ENCODE measurements at regions of chr17 and their contacts with region 1.

Region 1: GRCh38 chr17:75978938-75979704 is at the starts of genes ACOX1 and TEN1:
- DNase-seq: peak; percentile 94
- H3K4me3 Mint-ChIP-seq: peak within 1 kb of the TSS; percentile 96
- H3K27ac Mint-ChIP-seq: peak within 1 kb of the TSS; percentile 100
- H3K4me1 Mint-ChIP-seq: peaks cover 22% of the 10 kb centered on the region
- H3K27me3 Mint-ChIP-seq: no peaks in the 10 kb centered on the region
- total RNA-seq, gene ACOX1: 29.4 and 30.6 TPM in 2 replicates
- total RNA-seq, gene TEN1: 11.4 and 13.4 TPM in 2 replicates

Region 2: GRCh38 chr17:75914643-75915267 is 64.4 kb before region 1 on chr17:
- intact Hi-C with region 1: no loop called
- DNase-seq: no peak
- H3K4me3 Mint-ChIP-seq: no peak overlapping the region
- H3K27ac Mint-ChIP-seq: no peak overlapping the region
- H3K4me1 Mint-ChIP-seq: peaks cover 2% of the 10 kb centered on the region
- H3K27me3 Mint-ChIP-seq: no peaks in the 10 kb centered on the region

Region 3: DNA sequence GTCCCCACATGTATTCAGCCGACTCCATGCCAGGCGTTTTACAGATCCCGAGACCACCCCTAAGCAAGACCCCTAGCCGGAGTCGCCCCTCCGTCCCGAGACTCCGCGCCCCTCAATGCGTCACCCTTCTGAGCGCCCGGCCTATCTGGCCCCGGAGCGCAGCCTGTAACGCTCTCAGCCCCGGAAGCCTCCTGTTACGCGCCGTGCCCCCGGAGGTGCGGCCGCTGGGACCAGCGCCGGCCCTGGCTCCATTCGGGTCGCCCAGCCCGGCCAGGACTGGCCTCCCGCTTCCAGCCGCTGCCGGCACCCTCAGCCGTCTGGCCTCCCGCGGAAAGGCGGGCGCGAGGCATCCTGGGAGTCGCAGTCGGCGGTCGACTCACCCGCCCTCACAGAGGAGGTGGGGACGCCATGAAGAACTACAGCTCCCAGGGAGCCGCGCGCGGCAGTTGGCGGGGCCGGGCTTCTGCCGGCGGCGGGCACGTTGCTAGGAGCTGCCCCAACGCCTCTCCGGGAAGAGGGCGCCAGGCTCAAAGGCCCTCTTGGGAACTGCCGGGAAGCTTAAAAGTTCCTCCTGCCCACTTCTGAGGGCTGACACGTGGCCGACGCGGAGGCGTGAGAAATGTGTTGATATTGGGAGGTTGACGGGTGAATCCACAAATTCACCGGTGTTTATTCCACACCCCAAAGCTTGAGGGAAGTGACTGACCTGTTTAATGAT is 38.2 kb before region 1 on chr17 and contains the start of gene FBF1:
- intact Hi-C with region 1: loop called (anchors 2 kb)
- DNase-seq: peak; percentile 85
- H3K4me3 Mint-ChIP-seq: peak within 1 kb of the TSS; percentile 89
- H3K27ac Mint-ChIP-seq: peak within 1 kb of the TSS; percentile 67
- H3K4me1 Mint-ChIP-seq: peaks cover 12% of the 10 kb centered on the region
- H3K27me3 Mint-ChIP-seq: no peaks in the 10 kb centered on the region
- total RNA-seq, gene FBF1: 15.0 and 17.6 TPM in 2 replicates

Region 4: DNA sequence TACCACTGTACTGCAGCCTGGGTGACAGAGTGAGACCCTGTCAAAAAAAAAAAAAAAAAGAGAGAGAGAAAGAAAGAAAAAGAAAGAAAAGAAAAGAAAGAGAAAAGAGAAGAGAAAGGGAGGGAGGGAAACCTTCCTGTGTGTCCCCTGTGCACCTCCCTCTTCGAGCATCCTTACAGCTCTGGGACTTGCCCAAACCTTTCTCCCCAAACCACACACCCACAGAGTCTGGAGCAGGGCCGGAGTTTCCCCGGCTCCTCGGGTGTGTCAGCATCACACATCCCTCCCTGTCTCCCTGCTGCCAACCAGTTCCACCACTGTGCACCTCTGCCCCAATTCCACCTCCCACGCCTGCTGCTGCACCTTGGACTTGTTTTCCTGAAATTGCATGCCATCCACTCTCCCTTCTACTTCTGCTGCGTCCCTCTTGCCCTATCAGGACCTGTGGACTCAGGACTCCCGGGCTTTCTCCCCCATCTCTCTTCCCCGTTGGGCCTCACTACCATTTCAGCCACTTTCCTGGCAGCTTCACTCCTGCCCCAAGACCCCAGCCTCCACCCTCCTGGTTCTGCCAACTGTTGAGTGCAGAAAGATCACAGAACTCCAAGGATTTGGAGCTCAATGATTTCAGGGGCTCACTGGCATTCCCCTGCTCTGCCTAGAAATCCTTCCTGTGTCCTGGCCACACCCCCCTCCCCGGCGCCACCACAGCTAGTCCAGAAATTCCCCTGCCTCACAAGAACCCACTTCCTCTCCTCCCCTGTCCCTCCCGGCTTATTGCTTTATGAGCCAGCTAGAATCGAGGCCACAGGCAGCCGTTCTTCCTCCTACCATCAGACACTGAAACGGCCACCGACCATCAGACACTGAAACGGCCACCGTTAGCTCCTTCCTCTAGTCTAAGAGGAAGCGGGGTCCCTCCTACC is 17.8 kb after region 1 on chr17:
- intact Hi-C with region 1: loop called (anchors 2 kb)
- DNase-seq: no peak
- H3K4me3 Mint-ChIP-seq: peak overlapping the region; percentile 57
- H3K27ac Mint-ChIP-seq: peak overlapping the region; percentile 89
- H3K4me1 Mint-ChIP-seq: peaks cover 15% of the 10 kb centered on the region
- H3K27me3 Mint-ChIP-seq: no peaks in the 10 kb centered on the region

Region 5: DNA sequence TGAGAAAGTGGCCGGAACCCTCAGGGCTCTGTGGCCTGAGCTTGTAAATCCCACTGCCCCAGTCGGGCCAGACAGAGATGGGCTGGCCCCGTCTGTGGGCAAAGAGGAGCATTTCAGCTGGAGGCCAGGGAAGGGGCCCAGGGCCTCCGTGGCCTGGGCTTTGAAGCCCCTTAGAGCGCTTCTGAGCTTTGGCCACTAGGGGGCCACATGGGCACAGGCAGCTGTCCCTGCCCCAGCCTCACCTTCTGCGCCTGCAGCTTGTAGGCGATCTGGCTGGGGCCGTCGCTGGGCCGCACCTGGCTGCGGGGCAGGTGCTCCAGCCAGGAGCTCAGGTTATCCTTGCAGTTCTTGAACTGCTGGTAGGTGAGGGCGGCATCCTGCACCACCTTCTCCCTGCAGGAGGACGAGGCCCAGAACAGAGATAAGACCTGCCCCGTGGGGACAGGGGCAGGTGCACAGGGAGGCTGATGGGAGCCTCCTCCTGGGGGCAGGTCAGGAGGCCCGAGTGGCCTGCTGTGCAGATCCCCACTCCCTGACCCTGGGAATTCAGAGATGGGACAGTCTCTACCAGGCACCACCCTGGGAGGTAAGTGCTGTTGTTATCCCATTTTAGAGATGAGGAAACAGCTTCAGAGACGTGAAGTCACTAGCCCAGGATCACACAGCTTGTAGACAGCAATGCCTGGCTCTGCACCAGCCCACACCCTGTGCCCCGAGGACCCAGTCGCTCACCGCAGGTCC is 35.2 kb after region 1 on chr17:
- intact Hi-C with region 1: no loop called
- DNase-seq: peak; percentile 68
- H3K4me3 Mint-ChIP-seq: no peak overlapping the region
- H3K27ac Mint-ChIP-seq: no peak overlapping the region
- H3K4me1 Mint-ChIP-seq: no peaks in the 10 kb centered on the region
- H3K27me3 Mint-ChIP-seq: no peaks in the 10 kb centered on the region